Activated T-helper 2 cell treated with anti-CD3 and anti-CD28 coated beads, Interferon-gamma antibody, Interleukin-2, Interleukin-4, amounts not matched to agents 10 μg/mL and 5 μg/mL and 100 μg/mL, durations not matched to agents 14 hours and 24 hours and 36 hours (primary cell): ENCODE measurements at regions of chr7 and their contacts with region 1.

Region 1: DNA sequence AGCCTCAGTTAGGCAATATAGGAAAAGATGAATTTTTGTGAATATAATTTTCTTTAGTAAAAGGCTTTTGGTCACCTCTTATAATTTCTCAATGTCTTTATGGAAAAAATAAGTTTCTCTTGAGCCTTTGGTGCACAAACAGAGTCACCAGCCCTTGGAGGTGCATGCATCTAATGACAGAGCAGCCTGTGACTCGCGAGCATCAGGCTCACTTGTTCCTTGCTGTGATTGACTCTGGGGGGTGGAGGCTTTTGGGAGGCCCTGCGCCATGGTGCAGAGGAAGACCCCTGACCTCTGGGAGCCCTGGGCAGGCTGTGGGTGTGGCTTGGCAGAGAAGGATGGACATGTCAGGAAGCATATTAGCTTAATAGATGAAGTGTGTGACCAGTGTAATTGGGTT is 60.2 kb downstream of the FIGNL1 start:
- DNase-seq: no peak
- H3K4me3 Mint-ChIP-seq: no peak overlapping the region
- H3K27ac Mint-ChIP-seq: peak overlapping the region; percentile 62
- H3K4me1 Mint-ChIP-seq: peaks cover 67% of the 10 kb centered on the region
- H3K27me3 Mint-ChIP-seq: no peaks in the 10 kb centered on the region

Region 2: DNA sequence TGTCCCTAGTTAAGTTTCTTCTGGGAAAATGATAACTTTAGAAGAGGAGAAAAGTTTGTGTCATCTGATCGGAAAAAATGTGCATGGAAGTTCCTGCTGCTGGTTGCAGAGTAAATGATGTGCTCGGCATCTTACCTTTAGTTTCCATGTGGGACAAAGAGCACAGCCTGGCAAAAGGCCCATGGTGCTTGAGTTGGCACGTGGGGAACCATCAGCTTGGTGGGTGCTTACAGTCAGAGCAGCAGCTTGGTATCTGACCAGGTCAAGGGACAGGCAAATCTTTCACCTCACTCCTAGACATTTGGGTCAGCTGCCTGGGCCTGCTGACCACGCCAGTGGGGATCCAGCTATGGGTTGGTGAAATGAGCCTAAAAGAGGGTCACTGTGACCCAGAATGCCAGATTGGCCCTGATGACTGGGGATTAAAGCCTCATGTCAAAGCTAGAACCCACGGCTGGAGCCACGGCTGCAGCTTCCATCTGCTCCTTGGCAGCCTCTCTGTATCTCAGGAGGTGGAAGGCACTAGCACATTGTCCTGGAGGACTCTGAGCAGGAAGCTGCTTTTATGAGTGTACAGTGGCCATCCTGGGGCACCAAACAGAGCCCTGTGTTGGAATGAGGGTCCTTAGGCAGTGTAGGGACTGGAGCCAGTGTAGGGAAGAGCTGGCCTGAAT is 591.8 kb before region 1 on chr7:
- intact Hi-C with region 1: no loop called
- DNase-seq: no peak
- H3K4me3 Mint-ChIP-seq: no peak overlapping the region
- H3K27ac Mint-ChIP-seq: no peak overlapping the region
- H3K4me1 Mint-ChIP-seq: no peaks in the 10 kb centered on the region
- H3K27me3 Mint-ChIP-seq: peaks cover 1% of the 10 kb centered on the region

Region 3: DNA sequence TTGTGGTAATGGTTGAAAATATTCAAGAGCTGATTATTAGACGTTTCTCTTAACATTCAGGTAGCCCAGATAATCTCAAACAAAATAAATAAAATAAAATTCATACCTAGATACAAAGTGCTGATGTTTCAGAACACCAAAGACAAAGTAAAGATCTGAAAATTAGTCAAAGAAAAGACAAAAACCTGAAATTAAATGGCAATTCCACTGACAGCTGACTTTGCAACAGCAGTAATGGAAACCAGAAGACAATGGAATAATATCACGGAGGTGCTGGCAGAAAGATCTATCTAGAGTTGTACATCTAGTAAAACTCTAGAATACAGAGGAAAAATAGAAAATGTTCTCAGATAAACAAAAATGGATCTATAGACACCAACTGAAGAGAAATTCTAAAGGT is 143.4 kb before region 1 on chr7:
- intact Hi-C with region 1: no loop called
- DNase-seq: no peak
- H3K4me3 Mint-ChIP-seq: no peak overlapping the region
- H3K27ac Mint-ChIP-seq: no peak overlapping the region
- H3K4me1 Mint-ChIP-seq: peaks cover 9% of the 10 kb centered on the region
- H3K27me3 Mint-ChIP-seq: no peaks in the 10 kb centered on the region

Region 4: GRCh38 chr7:50377356-50377755 is 12.6 kb before region 1 on chr7:
- intact Hi-C with region 1: loop called (anchors 1 kb)
- DNase-seq: no peak
- H3K4me3 Mint-ChIP-seq: no peak overlapping the region
- H3K27ac Mint-ChIP-seq: peak overlapping the region; percentile 78
- H3K4me1 Mint-ChIP-seq: peaks cover 85% of the 10 kb centered on the region
- H3K27me3 Mint-ChIP-seq: no peaks in the 10 kb centered on the region

Region 5: GRCh38 chr7:50632561-50633413 is 242.8 kb after region 1 on chr7:
- intact Hi-C with region 1: no loop called
- DNase-seq: peak; percentile 37
- H3K4me3 Mint-ChIP-seq: no peak overlapping the region
- H3K27ac Mint-ChIP-seq: no peak overlapping the region
- H3K4me1 Mint-ChIP-seq: peaks cover 7% of the 10 kb centered on the region
- H3K27me3 Mint-ChIP-seq: peaks cover 17% of the 10 kb centered on the region

Region 6: DNA sequence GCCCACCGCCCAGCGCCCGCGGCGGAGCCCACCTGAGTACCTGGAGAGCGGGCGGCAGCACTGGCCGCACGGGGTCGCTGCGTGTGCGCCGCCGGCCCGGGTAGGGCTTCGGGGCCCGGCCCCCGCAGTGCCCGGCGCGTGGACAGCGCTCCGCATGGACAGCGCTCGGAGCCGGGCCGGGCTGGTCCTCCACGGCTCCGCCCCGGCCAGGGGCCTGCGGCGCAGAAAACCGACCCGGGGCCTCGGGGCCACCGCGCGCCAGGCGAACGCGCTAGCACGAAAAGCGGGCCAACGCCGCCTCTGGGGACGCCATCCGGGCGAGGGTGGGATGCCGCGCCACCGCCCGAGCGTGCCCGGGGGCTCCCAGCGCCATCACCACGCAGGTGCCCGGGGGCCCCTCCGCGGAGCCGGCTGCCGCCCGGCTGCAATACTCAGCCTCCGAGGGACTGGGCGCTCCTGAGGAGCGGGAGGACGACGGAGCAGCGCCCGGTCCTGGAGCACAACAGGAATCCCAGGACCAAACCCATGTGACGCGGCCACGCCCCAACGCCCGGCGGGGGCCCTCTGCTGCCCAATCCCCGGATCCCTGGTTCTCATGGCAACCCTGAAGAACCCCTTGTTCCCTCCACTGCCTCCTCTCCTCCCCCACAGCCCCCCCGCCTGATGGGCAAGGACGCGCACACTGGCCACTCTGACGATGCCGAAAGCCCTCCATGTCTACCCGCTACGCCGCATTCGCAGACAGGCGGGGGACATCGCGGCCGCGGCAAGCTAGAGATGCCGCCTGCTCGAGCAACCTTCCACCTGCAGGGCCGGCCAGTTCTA is 392.6 kb after region 1 on chr7 and contains the start of gene GRB10:
- intact Hi-C with region 1: no loop called
- DNase-seq: no peak
- H3K4me3 Mint-ChIP-seq: peak within 1 kb of the TSS; percentile 63
- H3K27ac Mint-ChIP-seq: no peak within 1 kb of the TSS
- H3K4me1 Mint-ChIP-seq: peaks cover 15% of the 10 kb centered on the region
- H3K27me3 Mint-ChIP-seq: peaks cover 41% of the 10 kb centered on the region
- total RNA-seq, gene GRB10: 2.3 and 2.4 TPM in 2 replicates